Activated naive CD4-positive, alpha-beta T cell treated with anti-CD3 and anti-CD28 coated beads for 36 hours (primary cell): ENCODE measurements at regions of chr17 and their contacts with region 1.

Region 1: GRCh38 chr17:74786431-74787055 is 10.4 kb upstream of the NAT9 start:
- DNase-seq: peak; percentile 40
- H3K4me3 Mint-ChIP-seq: no peak overlapping the region
- H3K27ac Mint-ChIP-seq: peak overlapping the region; percentile 54
- H3K4me1 Mint-ChIP-seq: peaks cover 59% of the 10 kb centered on the region
- H3K27me3 Mint-ChIP-seq: no peaks in the 10 kb centered on the region

Region 2: DNA sequence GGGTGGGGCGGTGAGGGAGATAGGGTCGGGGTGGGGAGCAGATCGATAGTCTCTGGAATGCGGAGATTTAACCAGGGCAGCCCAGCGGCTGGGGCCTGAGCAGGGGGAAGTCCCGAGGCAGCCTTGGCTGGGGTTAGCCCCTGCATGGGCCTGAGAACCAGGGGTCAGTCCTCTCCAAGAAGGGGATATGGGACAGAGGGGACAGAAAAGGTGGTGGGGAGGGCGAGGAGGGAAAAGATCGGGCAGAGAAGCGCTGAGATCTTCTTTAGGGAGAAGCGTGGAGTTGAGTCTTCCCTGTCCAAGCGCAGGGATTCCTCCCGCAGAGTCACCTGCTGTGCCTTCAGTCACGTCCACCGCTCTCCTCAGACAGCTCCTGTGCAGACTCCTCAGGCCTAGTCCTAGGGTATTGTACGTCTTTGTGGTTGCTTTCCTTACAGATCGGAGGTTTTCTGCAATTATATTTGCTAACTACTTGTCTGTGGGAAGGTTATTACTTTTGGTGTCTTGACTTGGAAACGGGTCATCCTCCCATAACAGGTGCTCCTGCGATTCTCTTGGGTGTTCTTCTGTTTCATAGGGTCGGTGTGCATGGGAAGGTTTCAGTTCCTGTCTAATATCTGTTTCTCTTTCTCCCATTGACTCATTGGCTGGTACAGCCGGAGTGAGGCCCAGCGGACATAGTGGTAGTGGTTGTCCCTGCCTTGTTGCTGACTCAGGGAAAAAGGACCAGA is 319.2 kb before region 1 on chr17:
- CTCF ChIA-PET with region 1: no interaction called
- intact Hi-C with region 1: no loop called
- DNase-seq: no peak
- H3K4me3 Mint-ChIP-seq: no peak overlapping the region
- H3K27ac Mint-ChIP-seq: peak overlapping the region; percentile 7
- H3K4me1 Mint-ChIP-seq: peaks cover 25% of the 10 kb centered on the region
- H3K27me3 Mint-ChIP-seq: no peaks in the 10 kb centered on the region

Region 3: GRCh38 chr17:74742153-74742515 is 44.4 kb before region 1 on chr17:
- CTCF ChIA-PET with region 1: interaction called, 52 read pairs
- intact Hi-C with region 1: loop called (anchors 2 kb)
- DNase-seq: peak; percentile 83
- H3K4me3 Mint-ChIP-seq: no peak overlapping the region
- H3K27ac Mint-ChIP-seq: peak overlapping the region; percentile 83
- H3K4me1 Mint-ChIP-seq: peaks cover 77% of the 10 kb centered on the region
- H3K27me3 Mint-ChIP-seq: no peaks in the 10 kb centered on the region

Region 4: DNA sequence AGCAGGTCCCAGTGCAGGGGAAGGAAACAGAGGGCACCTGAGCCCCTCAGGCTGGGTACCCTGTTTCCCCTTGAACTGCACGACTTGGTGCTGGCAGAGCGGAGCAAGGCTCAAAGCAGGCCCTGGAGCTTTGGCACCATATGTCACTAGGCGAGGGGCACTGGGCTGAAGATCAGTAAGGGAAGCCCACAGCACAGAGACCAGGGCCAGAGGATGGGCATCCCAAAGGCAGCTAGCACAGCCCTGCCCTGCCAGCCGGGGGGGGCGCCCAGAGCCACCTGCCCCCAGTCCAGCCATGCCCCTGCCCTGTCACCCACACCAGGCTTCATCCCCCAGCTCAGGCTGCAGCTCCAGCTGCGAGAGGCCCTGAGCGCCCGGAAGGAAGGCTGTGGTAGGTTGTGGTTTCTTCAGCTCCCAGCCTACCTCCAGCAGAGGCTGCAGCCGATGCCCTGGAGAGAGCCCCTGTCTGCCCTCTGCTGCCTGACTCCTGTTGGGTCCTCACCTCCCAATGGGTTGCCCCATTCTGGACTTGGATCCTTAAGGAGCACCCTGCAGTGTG is 27.2 kb before region 1 on chr17:
- CTCF ChIA-PET with region 1: interaction called, 14 read pairs
- intact Hi-C with region 1: no loop called
- DNase-seq: peak; percentile 70
- H3K4me3 Mint-ChIP-seq: no peak overlapping the region
- H3K27ac Mint-ChIP-seq: peak overlapping the region; percentile 86
- H3K4me1 Mint-ChIP-seq: peaks cover 61% of the 10 kb centered on the region
- H3K27me3 Mint-ChIP-seq: no peaks in the 10 kb centered on the region

Region 5: GRCh38 chr17:74776044-74776977 is 10.2 kb before region 1 on chr17 and contains the start of gene NAT9:
- CTCF ChIA-PET with region 1: interaction called, 41 read pairs
- intact Hi-C with region 1: no loop called
- DNase-seq: peak; percentile 98
- H3K4me3 Mint-ChIP-seq: peak within 1 kb of the TSS; percentile 100
- H3K27ac Mint-ChIP-seq: peak within 1 kb of the TSS; percentile 89
- H3K4me1 Mint-ChIP-seq: peaks cover 62% of the 10 kb centered on the region
- H3K27me3 Mint-ChIP-seq: no peaks in the 10 kb centered on the region
- total RNA-seq, gene NAT9: 42.1 to 43.9 TPM

Region 6: DNA sequence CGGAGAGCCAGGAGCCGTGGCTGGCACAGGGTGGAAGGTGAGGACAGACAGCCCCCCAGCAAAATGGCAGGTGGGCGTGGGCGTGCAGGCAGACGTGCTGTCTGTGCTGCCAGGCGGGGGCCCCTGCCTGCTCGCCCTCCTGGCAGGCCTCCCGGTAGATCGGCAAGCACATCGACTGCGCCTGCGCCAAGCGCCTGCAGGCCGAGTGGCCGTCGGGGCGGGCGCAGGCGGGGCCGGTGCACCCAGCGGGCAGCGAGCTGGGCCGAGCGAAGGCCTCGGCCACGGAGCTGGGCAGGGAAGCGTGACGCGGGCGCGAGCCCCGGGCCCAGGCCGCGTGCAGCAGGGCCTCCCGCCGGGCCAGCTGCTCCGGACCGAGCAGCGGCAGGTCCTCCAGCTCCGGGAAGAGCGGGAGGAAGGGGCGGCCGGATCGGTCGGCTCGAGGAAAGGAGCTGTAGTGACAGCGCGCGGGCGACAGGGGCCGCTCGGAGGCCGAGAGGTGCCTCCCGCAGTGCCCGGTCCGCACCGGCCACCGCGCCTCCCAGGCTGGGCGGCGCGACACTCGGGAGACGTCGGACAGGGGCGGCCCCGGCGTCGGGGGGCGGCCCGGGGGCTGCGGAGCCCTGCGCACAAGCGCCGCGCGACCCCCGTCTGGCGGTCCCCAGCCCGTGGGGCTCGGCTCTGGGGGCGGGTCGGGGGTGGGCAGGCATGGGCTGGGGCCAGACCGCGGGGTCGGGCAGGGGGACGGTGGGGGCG is 56.2 kb after region 1 on chr17:
- CTCF ChIA-PET with region 1: interaction called, 15 read pairs
- intact Hi-C with region 1: no loop called
- DNase-seq: no peak
- H3K4me3 Mint-ChIP-seq: no peak overlapping the region
- H3K27ac Mint-ChIP-seq: no peak overlapping the region
- H3K4me1 Mint-ChIP-seq: peaks cover 13% of the 10 kb centered on the region
- H3K27me3 Mint-ChIP-seq: peaks cover 10% of the 10 kb centered on the region

Region 7: DNA sequence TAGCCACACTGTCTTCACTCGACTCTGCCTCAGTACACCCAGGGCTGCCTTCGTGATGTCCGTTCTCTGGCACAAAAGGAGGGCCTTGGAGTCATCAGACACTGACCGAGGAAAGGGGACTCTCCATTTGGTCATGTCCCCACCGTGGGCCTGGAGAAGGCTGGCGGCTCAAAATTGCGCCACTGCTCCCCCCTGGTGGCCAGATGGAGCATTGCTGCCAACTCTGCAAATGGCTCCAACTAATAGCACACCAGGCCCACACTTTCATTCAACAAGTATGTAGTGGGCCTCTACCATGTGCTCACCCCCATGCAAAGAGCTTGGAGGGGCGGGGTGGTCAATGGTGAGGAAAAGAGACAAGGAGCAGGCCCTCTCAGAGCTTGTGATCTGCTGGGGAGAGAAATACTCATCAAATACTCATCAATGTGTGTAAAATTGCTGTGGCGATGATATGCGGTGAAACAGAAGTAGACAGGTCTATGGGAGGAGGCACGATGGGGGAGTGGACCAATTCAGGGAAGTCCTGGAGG is 78.4 kb after region 1 on chr17:
- CTCF ChIA-PET with region 1: interaction called, 165 read pairs
- intact Hi-C with region 1: loop called (anchors 1 kb)
- DNase-seq: peak; percentile 78
- H3K4me3 Mint-ChIP-seq: no peak overlapping the region
- H3K27ac Mint-ChIP-seq: no peak overlapping the region
- H3K4me1 Mint-ChIP-seq: peaks cover 15% of the 10 kb centered on the region
- H3K27me3 Mint-ChIP-seq: peaks cover 18% of the 10 kb centered on the region